GM12878 (cell line): ENCODE measurements at regions of chr7 and their contacts with region 1.

Region 1: DNA sequence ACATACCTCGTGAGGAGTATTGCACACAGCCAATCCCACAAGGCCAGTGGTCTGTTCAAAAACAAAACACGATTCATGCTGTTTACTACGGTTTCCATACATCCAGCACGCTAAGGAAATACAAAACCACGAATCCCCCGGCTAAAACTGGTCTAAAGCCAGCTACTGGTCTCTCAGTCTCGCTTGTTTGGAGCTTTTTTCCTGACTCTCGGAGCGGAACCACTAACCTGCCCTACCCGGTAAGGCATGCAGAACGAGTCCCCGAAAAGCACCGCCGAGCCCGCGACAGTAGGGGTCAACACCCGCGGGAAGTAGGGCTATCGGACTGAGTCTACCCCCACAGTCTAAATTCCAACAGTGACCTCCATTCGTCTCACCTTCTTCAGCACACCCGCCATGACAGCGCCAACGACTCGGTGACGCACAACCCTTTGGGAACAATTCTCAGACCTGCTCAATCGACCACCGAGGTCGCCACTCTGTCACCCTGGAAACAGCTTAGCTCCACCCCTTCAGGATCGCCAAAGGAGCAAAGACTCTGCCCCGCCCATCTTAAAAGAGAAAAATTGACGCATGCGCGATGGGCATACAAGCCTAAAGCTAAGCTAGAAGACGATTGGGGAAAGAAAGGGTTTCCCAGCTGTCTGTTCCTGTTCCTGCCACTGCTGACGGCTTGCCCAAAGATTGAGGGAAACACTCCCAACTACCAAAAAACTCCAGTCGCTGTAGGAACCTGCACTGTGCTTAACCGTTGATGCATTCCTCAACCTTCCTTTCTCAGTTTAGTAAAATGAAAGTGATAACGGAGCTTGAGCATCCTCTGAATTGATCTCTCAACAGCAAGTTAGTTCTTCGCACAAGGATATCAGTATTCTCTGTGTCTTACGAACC is at the start of gene NDUFA5:
- DNase-seq: peak; percentile 95
- ATAC-seq: peak; percentile 97
- H3K4me3 ChIP-seq: peak within 1 kb of the TSS; percentile 90
- H3K27ac ChIP-seq: peak within 1 kb of the TSS; percentile 85
- H3K4me1 ChIP-seq: no peaks in the 10 kb centered on the region
- H3K27me3 ChIP-seq: no peaks in the 10 kb centered on the region
- CTCF ChIP-seq: no peak
- EP300 ChIP-seq: peak in 1 of 2 experiments; percentile 44; a peak in 1 of 4 replicates
- POLR2A ChIP-seq: peak; percentile 90
- RAD21 ChIP-seq: no peak
- polyA plus RNA-seq, gene NDUFA5: 183 to 209 TPM

Region 2: GRCh38 chr7:123502201-123502600 is 55.4 kb before region 1 on chr7:
- CTCF ChIA-PET with region 1: no interaction called
- POLR2A ChIA-PET with region 1: no interaction called
- RAD21 ChIA-PET with region 1: no interaction called
- SMC1A ChIA-PET with region 1: no interaction called
- in situ Hi-C with region 1: no loop called
- intact Hi-C with region 1: no loop called
- DNase-seq: no peak
- ATAC-seq: no peak
- H3K4me3 ChIP-seq: no peak overlapping the region
- H3K27ac ChIP-seq: no peak overlapping the region
- H3K4me1 ChIP-seq: no peaks in the 10 kb centered on the region
- H3K27me3 ChIP-seq: no peaks in the 10 kb centered on the region
- CTCF ChIP-seq: no peak
- EP300 ChIP-seq: no peak
- POLR2A ChIP-seq: no peak
- RAD21 ChIP-seq: no peak

Region 3: DNA sequence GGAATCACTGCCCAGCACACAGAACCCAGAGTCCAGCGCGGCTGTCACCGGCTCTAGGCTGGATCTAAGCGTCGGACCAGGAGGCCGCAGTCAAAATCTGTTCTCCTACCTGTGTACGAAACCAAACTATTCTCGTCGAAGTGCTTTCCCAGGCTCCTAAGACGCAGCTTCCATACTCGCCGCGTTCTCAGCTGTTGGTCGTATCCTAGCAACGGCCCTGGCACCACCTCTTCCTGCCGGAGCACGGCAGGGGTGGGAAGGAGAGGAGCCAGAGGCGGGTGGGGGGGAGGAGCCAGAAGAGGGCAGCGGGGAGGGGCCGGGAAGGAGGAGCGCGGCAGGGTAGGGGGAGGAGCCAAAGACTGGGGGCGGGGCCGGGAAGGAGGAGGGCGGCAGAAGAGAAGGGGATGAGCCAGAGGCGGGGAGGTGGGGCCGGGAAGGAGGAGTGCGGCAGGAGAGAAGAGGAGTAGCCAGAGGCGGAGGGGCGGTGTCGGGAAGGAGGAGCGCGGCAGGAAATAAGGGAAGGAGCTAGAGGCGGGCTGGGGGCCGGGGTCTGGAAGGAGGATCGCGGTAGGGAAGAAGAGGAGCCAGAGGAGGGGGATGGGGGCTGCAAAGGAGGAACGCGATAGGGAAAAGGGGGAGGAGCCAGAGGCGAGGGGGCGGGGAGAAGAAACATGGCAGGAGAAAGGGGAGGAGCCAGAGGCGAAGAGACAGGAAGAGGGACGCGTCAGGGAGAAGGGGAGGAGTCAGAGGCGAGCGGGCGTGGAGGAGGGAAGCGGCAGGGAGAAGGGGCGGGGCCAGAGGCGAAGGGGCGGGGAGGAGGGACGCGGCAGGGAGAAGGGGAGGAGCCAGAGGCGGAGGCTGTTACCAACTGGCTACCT is 23.0 kb before region 1 on chr7 and contains the start of gene IQUB:
- CTCF ChIA-PET with region 1: interaction called, 10 read pairs
- POLR2A ChIA-PET with region 1: interaction called, 7 read pairs
- RAD21 ChIA-PET with region 1: interaction called, 5 read pairs
- SMC1A ChIA-PET with region 1: interaction called, 18 read pairs
- in situ Hi-C with region 1: no loop called
- intact Hi-C with region 1: loop called (anchors 1 kb)
- DNase-seq: peak; percentile 82
- ATAC-seq: peak; percentile 90
- H3K4me3 ChIP-seq: peak within 1 kb of the TSS; percentile 69
- H3K27ac ChIP-seq: no peak within 1 kb of the TSS; the same call in 1 of the 2 replicates
- H3K4me1 ChIP-seq: no peaks in the 10 kb centered on the region
- H3K27me3 ChIP-seq: peaks cover 0 to 3% of the 10 kb centered on the region in 2 experiments; a peak in 1 of 4 replicates
- CTCF ChIP-seq: no peak
- EP300 ChIP-seq: no peak
- POLR2A ChIP-seq: peak; percentile 49
- RAD21 ChIP-seq: no peak
- polyA plus RNA-seq, gene IQUB: not detected

Region 4: GRCh38 chr7:123624527-123625183 is 67.0 kb after region 1 on chr7:
- CTCF ChIA-PET with region 1: interaction called, 11 read pairs
- POLR2A ChIA-PET with region 1: no interaction called
- RAD21 ChIA-PET with region 1: no interaction called
- SMC1A ChIA-PET with region 1: no interaction called
- in situ Hi-C with region 1: no loop called
- intact Hi-C with region 1: no loop called
- DNase-seq: peak; percentile 25
- ATAC-seq: peak; percentile 97
- H3K4me3 ChIP-seq: no peak overlapping the region
- H3K27ac ChIP-seq: no peak overlapping the region
- H3K4me1 ChIP-seq: no peaks in the 10 kb centered on the region
- H3K27me3 ChIP-seq: no peaks in the 10 kb centered on the region
- CTCF ChIP-seq: peak; percentile 68 to 94 (median 91)
- EP300 ChIP-seq: no peak
- POLR2A ChIP-seq: no peak
- RAD21 ChIP-seq: peak; percentile 40

Region 5: GRCh38 chr7:124929467-124930172 is 1372.0 kb after region 1 on chr7 and contains the start of gene POT1:
- CTCF ChIA-PET with region 1: no interaction called
- POLR2A ChIA-PET with region 1: no interaction called
- RAD21 ChIA-PET with region 1: no interaction called
- SMC1A ChIA-PET with region 1: no interaction called
- in situ Hi-C with region 1: no loop called
- intact Hi-C with region 1: loop called (anchors 10 kb)
- DNase-seq: peak; percentile 96
- ATAC-seq: peak; percentile 98
- H3K4me3 ChIP-seq: peak within 1 kb of the TSS; percentile 88
- H3K27ac ChIP-seq: peak within 1 kb of the TSS; percentile 74
- H3K4me1 ChIP-seq: no peaks in the 10 kb centered on the region; the same call in 1 of the 2 replicates
- H3K27me3 ChIP-seq: no peaks in the 10 kb centered on the region
- CTCF ChIP-seq: no peak
- EP300 ChIP-seq: 0 out of 4 replicates have a peak, but pooled peaks of 1 of the 2 experiments have one; percentile 50
- POLR2A ChIP-seq: peak; percentile 77
- RAD21 ChIP-seq: no peak
- polyA plus RNA-seq, gene POT1: 16.3 to 17.1 TPM